ENCODE measurements at regions of chr1 and their contacts with region 1.

Region 1: DNA sequence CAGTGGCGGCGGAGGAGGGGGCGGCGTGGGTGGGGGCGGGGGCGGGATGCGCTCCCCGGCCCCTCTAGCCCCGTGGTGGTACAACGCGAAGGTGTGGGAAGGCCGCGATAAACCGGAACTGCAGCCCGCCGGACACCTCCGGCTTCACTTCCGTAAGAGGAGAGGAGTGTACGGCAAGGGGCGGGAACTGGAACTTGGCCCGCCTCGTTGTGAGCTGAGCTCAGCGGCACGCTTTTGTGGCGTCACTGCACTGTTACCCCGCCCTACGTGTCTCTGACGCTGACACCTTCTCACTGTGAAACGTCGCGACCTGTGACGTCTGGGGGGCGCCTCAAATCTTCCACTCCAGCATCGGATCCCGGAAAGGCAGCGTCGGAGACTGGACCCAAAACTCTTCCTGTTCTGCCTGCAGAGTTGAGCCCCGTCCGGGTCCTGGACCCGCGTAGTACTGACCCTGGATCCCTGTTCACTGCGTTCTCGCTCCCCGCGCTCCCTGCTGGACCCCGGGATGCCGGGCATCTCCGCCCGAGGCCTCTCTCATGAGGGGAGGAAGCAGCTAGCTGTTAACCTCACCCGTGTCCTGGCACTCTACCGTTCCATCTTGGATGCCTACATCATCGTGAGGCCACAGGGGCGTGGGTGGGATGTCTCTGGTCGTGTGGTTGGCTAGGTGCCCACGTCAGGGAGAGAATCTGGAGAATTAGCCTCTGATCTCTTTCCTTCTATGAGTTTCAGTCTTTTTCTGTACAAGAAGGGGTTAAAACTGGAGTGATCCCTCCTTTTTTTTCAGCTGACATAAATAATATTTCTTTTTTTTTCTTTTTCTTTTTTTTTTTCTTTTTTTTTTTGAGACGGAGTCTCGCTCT is at the start of gene ISG20L2:
- DNase-seq: peak; percentile 76 to 98 (median 94)
- ATAC-seq: peak; percentile 96
- H3K4me3 ChIP-seq: peak within 1 kb of the TSS; percentile 97
- H3K4me3 Mint-ChIP-seq: no peak within 1 kb of the TSS
- H3K27ac ChIP-seq: peak within 1 kb of the TSS; percentile 95
- H3K27ac Mint-ChIP-seq: peak within 1 kb of the TSS in 4 of 9 donors; percentile 94 to 99 (median 98)
- H3K4me1 ChIP-seq: peaks cover 38 to 40% of the 10 kb centered on the region in 2 donors
- H3K4me1 Mint-ChIP-seq: peaks cover 18 to 35% (median 22%) of the 10 kb centered on the region in 7 donors
- H3K27me3 ChIP-seq: no peaks in the 10 kb centered on the region
- H3K27me3 Mint-ChIP-seq: no peaks in the 10 kb centered on the region
- total RNA-seq, gene ISG20L2: 44.7 to 59.9 (median 53.9) TPM

Region 2: GRCh38 chr1:156625436-156626078 is 103.3 kb before region 1 on chr1:
- CTCF ChIA-PET with region 1: interaction called, 5 read pairs
- POLR2A ChIA-PET with region 1: interaction called, 3 read pairs
- intact Hi-C with region 1: loop called (anchors 1 to 5 kb)
- DNase-seq: peak; percentile 51 to 78 (median 65)
- ATAC-seq: peak; percentile 83
- H3K4me3 ChIP-seq: peak overlapping the region; percentile 47
- H3K4me3 Mint-ChIP-seq: peak overlapping the region; percentile 74 to 92 (median 81)
- H3K27ac ChIP-seq: no peak overlapping the region
- H3K27ac Mint-ChIP-seq: peak overlapping the region in 4 of 9 donors; percentile 8 to 44 (median 21)
- H3K4me1 ChIP-seq: peaks cover 9 to 15% of the 10 kb centered on the region in 2 donors
- H3K4me1 Mint-ChIP-seq: peaks cover 7 to 13% (median 11%) of the 10 kb centered on the region in 7 donors
- H3K27me3 ChIP-seq: peaks cover 8 to 31% of the 10 kb centered on the region in 2 donors
- H3K27me3 Mint-ChIP-seq: peaks cover 46 to 71% (median 59%) of the 10 kb centered on the region in 5 donors

Region 3: GRCh38 chr1:156689035-156689952 is 39.5 kb before region 1 on chr1:
- CTCF ChIA-PET with region 1: interaction called, 234 read pairs
- POLR2A ChIA-PET with region 1: interaction called, 53 read pairs
- intact Hi-C with region 1: loop called (anchors 1 kb)
- DNase-seq: peak; percentile 54 to 78 (median 71)
- ATAC-seq: peak; percentile 98
- H3K4me3 ChIP-seq: no peak overlapping the region
- H3K4me3 Mint-ChIP-seq: peak overlapping the region in 5 of 10 donors; percentile 48 to 78 (median 60)
- H3K27ac ChIP-seq: no peak overlapping the region
- H3K27ac Mint-ChIP-seq: peak overlapping the region in 3 of 9 donors; percentile 1 to 74 (median 60)
- H3K4me1 ChIP-seq: peaks cover 5 to 20% of the 10 kb centered on the region in 2 donors
- H3K4me1 Mint-ChIP-seq: peaks cover 20 to 35% (median 30%) of the 10 kb centered on the region in 7 donors
- H3K27me3 ChIP-seq: peaks cover 0 to 5% of the 10 kb centered on the region in 2 donors
- H3K27me3 Mint-ChIP-seq: peaks cover 38 to 62% (median 44%) of the 10 kb centered on the region in 5 donors

Region 4: GRCh38 chr1:156746728-156747631 is 18.1 kb after region 1 on chr1:
- CTCF ChIA-PET with region 1: interaction called, 10 read pairs
- POLR2A ChIA-PET with region 1: interaction called, 77 read pairs
- intact Hi-C with region 1: loop called (anchors 1 kb)
- DNase-seq: peak in 5 of 9 donors; percentile 31 to 69 (median 45)
- ATAC-seq: no peak
- H3K4me3 ChIP-seq: peak overlapping the region; percentile 76
- H3K4me3 Mint-ChIP-seq: peak overlapping the region; percentile 88 to 98 (median 94)
- H3K27ac ChIP-seq: peak overlapping the region; percentile 90
- H3K27ac Mint-ChIP-seq: peak overlapping the region; percentile 82 to 95 (median 91)
- H3K4me1 ChIP-seq: peaks cover 35 to 43% of the 10 kb centered on the region in 2 donors
- H3K4me1 Mint-ChIP-seq: peaks cover 50 to 65% (median 55%) of the 10 kb centered on the region in 7 donors
- H3K27me3 ChIP-seq: no peaks in the 10 kb centered on the region
- H3K27me3 Mint-ChIP-seq: no peaks in the 10 kb centered on the region

Region 5: DNA sequence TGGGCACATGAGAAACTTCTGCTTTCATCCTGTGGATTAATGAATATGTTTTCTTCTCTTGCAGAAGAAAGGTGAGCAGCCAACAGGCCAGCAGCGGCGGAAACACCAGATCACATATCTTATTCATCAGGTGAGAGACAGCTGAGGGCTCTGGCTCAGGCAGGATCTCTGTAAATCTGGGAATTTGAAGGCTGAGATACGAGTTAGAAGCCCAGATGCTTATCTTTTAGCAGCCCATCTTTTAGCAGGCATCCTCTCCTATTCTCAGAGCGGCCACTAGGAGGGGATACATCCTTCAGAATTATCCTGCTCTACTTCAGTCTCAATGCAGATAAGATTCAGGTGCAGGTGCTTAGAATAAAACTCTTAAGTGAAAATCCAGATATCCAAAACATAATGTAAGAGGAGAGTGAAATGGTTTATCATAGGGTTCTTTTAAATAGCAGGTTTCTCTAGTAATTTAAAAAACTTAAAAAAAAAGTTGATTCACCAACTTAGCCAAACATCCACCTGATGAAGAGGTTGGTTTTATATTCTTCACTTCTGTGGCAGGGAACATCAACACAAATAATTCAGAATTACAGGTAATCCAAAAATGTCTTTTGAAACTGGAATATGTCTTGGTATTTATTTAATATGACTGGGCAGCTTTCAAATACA is 68.5 kb after region 1 on chr1:
- CTCF ChIA-PET with region 1: interaction called, 10 read pairs
- POLR2A ChIA-PET with region 1: no interaction called
- intact Hi-C with region 1: no loop called
- DNase-seq: peak in 8 of 9 donors; percentile 47 to 76 (median 66)
- ATAC-seq: peak; percentile 89
- H3K4me3 ChIP-seq: no peak overlapping the region
- H3K4me3 Mint-ChIP-seq: no peak overlapping the region
- H3K27ac ChIP-seq: no peak overlapping the region
- H3K27ac Mint-ChIP-seq: peak overlapping the region in 5 of 9 donors; percentile 0 to 49 (median 18)
- H3K4me1 ChIP-seq: no peaks in the 10 kb centered on the region
- H3K4me1 Mint-ChIP-seq: peaks cover 0 to 24% (median 8%) of the 10 kb centered on the region in 7 donors
- H3K27me3 ChIP-seq: no peaks in the 10 kb centered on the region
- H3K27me3 Mint-ChIP-seq: no peaks in the 10 kb centered on the region

Region 6: DNA sequence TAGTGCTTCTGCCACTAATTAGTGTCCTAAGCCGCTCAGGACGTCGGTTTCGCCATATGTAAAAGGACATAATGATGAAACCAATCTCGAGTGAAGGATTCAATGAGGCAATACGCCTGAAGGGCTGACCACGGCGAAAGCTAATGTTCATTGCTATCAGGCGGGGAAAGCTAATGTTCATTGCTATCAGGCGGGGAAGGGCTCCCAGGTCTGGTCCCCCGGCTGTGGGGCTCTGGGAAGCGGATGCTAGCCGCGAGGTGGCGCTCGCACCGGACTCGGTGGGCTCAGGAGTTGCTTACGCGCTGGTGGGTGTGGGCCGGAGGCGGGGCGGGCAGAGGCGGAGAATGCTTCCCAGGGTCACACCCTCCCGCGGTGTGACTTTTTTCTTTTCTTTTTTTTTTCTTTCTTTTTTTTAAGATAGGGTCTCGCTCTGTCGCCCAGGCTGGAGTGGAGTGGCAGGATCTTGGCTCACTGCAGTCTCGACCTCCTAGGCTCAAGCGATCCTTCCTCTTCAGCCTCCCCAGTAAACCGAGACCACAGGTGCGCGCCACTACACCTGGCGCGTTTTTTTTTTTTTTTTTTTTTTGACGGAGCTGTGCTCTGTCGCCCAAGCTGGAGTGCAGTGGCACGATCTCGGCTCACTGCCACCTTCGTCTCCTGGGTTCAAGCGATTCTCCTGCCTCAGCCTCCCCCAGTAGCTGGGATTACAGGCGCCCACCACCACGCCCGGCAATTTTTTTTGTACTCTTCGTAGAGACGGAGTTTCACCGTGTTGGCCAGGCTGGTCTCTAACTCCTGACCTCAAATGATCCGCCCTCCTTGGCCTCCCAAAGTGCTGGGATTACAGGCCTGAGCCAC is 163.6 kb after region 1 on chr1:
- CTCF ChIA-PET with region 1: interaction called, 17 read pairs
- POLR2A ChIA-PET with region 1: no interaction called
- intact Hi-C with region 1: loop called (anchors 1 kb)
- DNase-seq: peak; percentile 67 to 91 (median 79)
- ATAC-seq: peak; percentile 94
- H3K4me3 ChIP-seq: peak overlapping the region; percentile 41
- H3K4me3 Mint-ChIP-seq: peak overlapping the region; percentile 68 to 84 (median 75)
- H3K27ac ChIP-seq: no peak overlapping the region
- H3K27ac Mint-ChIP-seq: no peak overlapping the region
- H3K4me1 ChIP-seq: peaks cover 0 to 8% of the 10 kb centered on the region in 2 donors
- H3K4me1 Mint-ChIP-seq: peaks cover 8 to 25% (median 18%) of the 10 kb centered on the region in 7 donors
- H3K27me3 ChIP-seq: peaks cover 8 to 11% of the 10 kb centered on the region in 2 donors
- H3K27me3 Mint-ChIP-seq: peaks cover 21 to 51% (median 43%) of the 10 kb centered on the region in 5 donors